ENCODE measurements at regions of chr10 and their contacts with region 1.

Region 1: DNA sequence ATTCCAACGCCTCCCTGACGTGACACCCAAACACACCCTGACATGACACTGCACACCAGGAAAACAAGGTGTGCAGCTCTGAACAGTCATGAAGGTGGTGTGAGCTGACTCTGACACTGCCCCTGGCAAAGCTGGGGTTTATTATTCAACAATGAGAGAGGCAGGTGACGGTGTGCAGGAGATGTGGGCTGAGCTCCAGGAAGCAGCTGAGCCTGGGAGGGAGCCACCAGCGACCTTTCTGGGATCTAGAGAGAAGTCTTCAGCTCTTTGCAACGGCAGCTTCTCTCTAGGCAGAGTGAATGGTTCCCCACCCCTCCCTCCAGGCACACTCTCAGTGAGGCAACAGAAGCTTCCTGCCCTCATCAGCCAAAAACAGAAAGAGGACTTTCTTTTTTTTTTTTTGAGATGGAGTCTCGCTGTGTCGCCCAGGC is 65.6 kb downstream of the SH3PXD2A start:
- DNase-seq: no peak
- ATAC-seq: no peak
- H3K4me3 ChIP-seq: no peak overlapping the region
- H3K27ac ChIP-seq: peak overlapping the region; percentile 27
- H3K4me1 ChIP-seq: peaks cover 81% of the 10 kb centered on the region
- H3K27me3 ChIP-seq: no peaks in the 10 kb centered on the region
- CTCF ChIP-seq: no peak
- EP300 ChIP-seq: no peak
- POLR2A ChIP-seq: no peak
- RAD21 ChIP-seq: no peak

Region 2: GRCh38 chr10:103712570-103713498 is 77.0 kb before region 1 on chr10:
- CTCF ChIA-PET with region 1: no interaction called
- POLR2A ChIA-PET with region 1: no interaction called
- in situ Hi-C with region 1: loop called (anchors 5 kb)
- intact Hi-C with region 1: loop called (anchors 5 kb)
- DNase-seq: peak; percentile 57
- ATAC-seq: peak; percentile 59
- H3K4me3 ChIP-seq: no peak overlapping the region
- H3K27ac ChIP-seq: peak overlapping the region; percentile 11
- H3K4me1 ChIP-seq: peaks cover 58% of the 10 kb centered on the region
- H3K27me3 ChIP-seq: no peaks in the 10 kb centered on the region
- CTCF ChIP-seq: peak; percentile 90
- EP300 ChIP-seq: no peak
- POLR2A ChIP-seq: no peak
- RAD21 ChIP-seq: peak; percentile 82

Region 3: DNA sequence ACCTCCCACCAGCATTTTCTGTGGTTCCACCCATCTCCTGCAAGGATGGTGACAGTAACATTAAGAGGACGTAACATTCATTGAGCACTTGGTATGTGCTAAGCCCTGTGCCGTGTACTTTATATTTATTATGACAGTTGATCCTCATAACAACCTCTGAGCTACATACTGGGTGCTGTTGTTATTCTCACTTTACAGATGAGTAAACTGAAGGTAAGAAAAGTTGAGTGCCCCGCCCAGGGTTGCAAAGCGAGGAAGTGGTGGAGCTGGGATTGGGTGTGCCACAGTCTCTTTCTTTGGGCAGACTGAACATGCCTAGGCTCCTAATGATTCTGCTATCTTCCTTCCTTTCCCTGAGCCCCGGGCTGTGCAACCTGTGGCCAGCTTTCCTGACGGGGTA is 41.8 kb before region 1 on chr10:
- CTCF ChIA-PET with region 1: no interaction called
- POLR2A ChIA-PET with region 1: no interaction called
- in situ Hi-C with region 1: no loop called
- intact Hi-C with region 1: no loop called
- DNase-seq: no peak
- ATAC-seq: no peak
- H3K4me3 ChIP-seq: no peak overlapping the region
- H3K27ac ChIP-seq: no peak overlapping the region
- H3K4me1 ChIP-seq: peaks cover 13% of the 10 kb centered on the region
- H3K27me3 ChIP-seq: no peaks in the 10 kb centered on the region
- CTCF ChIP-seq: no peak
- EP300 ChIP-seq: no peak
- POLR2A ChIP-seq: no peak
- RAD21 ChIP-seq: no peak

Region 4: GRCh38 chr10:103759100-103759781 is 30.5 kb before region 1 on chr10:
- CTCF ChIA-PET with region 1: no interaction called
- POLR2A ChIA-PET with region 1: interaction called, 19 read pairs
- in situ Hi-C with region 1: no loop called
- intact Hi-C with region 1: loop called (anchors 2 kb)
- DNase-seq: peak; percentile 80
- ATAC-seq: peak; percentile 76
- H3K4me3 ChIP-seq: no peak overlapping the region
- H3K27ac ChIP-seq: peak overlapping the region; percentile 53
- H3K4me1 ChIP-seq: peaks cover 31% of the 10 kb centered on the region
- H3K27me3 ChIP-seq: no peaks in the 10 kb centered on the region
- CTCF ChIP-seq: no peak
- EP300 ChIP-seq: 0 out of 4 replicates have a peak, but pooled peaks of 1 of the 2 experiments have one; percentile 24
- POLR2A ChIP-seq: no peak
- RAD21 ChIP-seq: no peak

Region 5: GRCh38 chr10:103814626-103815370 is 25.0 kb after region 1 on chr10:
- CTCF ChIA-PET with region 1: no interaction called
- POLR2A ChIA-PET with region 1: interaction called, 12 read pairs
- in situ Hi-C with region 1: no loop called
- intact Hi-C with region 1: no loop called
- DNase-seq: no peak
- ATAC-seq: no peak
- H3K4me3 ChIP-seq: no peak overlapping the region
- H3K27ac ChIP-seq: no peak overlapping the region
- H3K4me1 ChIP-seq: peaks cover 73% of the 10 kb centered on the region
- H3K27me3 ChIP-seq: no peaks in the 10 kb centered on the region; a peak in 1 of 5 replicates
- CTCF ChIP-seq: no peak
- EP300 ChIP-seq: no peak
- POLR2A ChIP-seq: no peak
- RAD21 ChIP-seq: no peak

Region 6: GRCh38 chr10:103820101-103821062 is 30.6 kb after region 1 on chr10:
- CTCF ChIA-PET with region 1: no interaction called
- POLR2A ChIA-PET with region 1: interaction called, 10 read pairs
- in situ Hi-C with region 1: no loop called
- intact Hi-C with region 1: no loop called
- DNase-seq: no peak
- ATAC-seq: no peak
- H3K4me3 ChIP-seq: no peak overlapping the region; a peak in 1 of 6 replicates
- H3K27ac ChIP-seq: no peak overlapping the region
- H3K4me1 ChIP-seq: peaks cover 78% of the 10 kb centered on the region
- H3K27me3 ChIP-seq: no peaks in the 10 kb centered on the region
- CTCF ChIP-seq: no peak
- EP300 ChIP-seq: no peak
- POLR2A ChIP-seq: no peak
- RAD21 ChIP-seq: no peak

Region 7: GRCh38 chr10:103833731-103834365 is 44.1 kb after region 1 on chr10:
- CTCF ChIA-PET with region 1: no interaction called
- POLR2A ChIA-PET with region 1: interaction called, 30 read pairs
- in situ Hi-C with region 1: no loop called
- intact Hi-C with region 1: no loop called
- DNase-seq: peak; percentile 88
- ATAC-seq: peak; percentile 79
- H3K4me3 ChIP-seq: peak overlapping the region; percentile 2 to 29 (median 21); a peak in 3 of 6 replicates
- H3K27ac ChIP-seq: peak overlapping the region; percentile 81
- H3K4me1 ChIP-seq: peaks cover 94% of the 10 kb centered on the region
- H3K27me3 ChIP-seq: no peaks in the 10 kb centered on the region
- CTCF ChIP-seq: 0 out of 2 replicates have a peak, but pooled peaks have one; percentile 10
- EP300 ChIP-seq: peak in 1 of 2 experiments; percentile 79; a peak in 2 of 4 replicates
- POLR2A ChIP-seq: no peak
- RAD21 ChIP-seq: peak; percentile 40; the same call in 1 of the 2 replicates

Region 8: DNA sequence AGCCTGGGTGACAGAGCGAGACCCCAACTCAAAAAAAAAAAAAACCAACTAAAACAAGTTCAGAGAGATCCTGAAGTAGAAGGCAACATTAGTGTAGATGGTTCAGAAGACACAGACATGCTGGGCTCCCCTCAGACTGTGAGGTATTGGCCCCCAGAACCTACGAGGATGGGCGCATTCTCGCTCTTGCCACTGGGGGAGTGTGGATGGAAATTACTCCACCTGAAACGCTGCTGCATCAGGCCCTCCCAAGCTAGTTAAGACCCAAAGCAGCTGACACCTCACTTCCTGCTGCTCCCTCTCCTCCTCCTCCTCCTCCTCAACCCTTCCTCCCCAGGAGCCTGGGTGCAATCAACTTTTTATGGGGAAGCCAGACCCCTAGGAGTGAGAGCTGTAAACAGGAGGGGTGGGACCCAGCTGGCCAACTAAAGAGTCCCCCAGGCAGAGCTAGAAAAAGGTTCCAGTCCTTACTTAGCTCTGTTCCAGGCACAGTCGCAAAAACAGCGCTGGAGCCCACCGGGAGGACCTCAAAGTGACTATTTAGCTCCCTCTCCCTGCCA is 58.2 kb after region 1 on chr10:
- CTCF ChIA-PET with region 1: no interaction called
- POLR2A ChIA-PET with region 1: interaction called, 107 read pairs
- in situ Hi-C with region 1: no loop called
- intact Hi-C with region 1: no loop called
- DNase-seq: peak; percentile 21
- ATAC-seq: peak; percentile 79
- H3K4me3 ChIP-seq: no peak overlapping the region
- H3K27ac ChIP-seq: peak overlapping the region; percentile 16
- H3K4me1 ChIP-seq: peaks cover 93% of the 10 kb centered on the region
- H3K27me3 ChIP-seq: no peaks in the 10 kb centered on the region
- CTCF ChIP-seq: 0 out of 2 replicates have a peak, but pooled peaks have one; percentile 11
- EP300 ChIP-seq: no peak
- POLR2A ChIP-seq: no peak
- RAD21 ChIP-seq: no peak

Region 9: DNA sequence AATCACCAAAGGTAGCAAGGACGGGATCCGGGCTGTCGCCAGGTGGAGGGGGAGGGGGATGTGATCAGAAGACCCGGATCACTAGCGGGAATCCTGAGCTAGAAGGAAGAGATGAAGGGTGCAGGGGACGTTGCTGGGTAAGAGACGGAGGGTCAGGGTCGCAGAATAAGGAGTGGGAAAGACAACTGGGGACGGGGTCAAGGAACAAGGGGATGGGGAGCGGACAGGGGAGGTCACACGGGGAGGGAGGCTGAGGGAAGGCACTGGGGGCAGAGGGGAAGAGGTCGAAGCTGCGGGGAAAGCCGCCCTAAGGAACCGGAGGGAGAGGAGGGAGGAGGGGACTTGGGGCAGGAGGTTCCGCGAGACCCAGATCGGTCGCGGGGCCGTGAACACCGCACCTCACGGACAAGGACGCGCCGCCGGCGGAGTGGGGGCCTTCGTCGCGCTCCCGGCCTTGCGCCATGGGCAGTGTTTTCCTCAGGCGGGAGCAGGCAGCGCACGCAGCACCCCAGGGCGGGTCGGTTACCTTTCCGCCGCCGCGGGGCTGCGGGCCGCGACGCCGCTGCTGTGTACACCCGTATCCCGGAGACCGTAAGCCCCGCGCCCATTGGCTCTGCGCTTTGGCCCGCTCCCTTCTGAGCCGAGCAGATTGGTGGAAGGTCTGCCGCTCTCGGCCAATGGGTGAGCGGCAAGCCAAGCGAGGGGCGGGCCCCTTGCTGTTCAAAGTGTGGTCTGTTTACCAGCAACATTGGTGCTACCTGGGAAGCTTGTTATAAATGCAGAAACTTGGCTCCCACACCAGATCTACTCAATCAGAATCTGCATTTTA is 442.2 kb after region 1 on chr10 and contains the start of gene CFAP43:
- CTCF ChIA-PET with region 1: no interaction called
- POLR2A ChIA-PET with region 1: no interaction called
- in situ Hi-C with region 1: no loop called
- intact Hi-C with region 1: no loop called
- DNase-seq: peak; percentile 93
- ATAC-seq: peak; percentile 100
- H3K4me3 ChIP-seq: peak within 1 kb of the TSS; percentile 79 to 93 (median 86)
- H3K27ac ChIP-seq: peak within 1 kb of the TSS; percentile 82
- H3K4me1 ChIP-seq: peaks cover 21% of the 10 kb centered on the region
- H3K27me3 ChIP-seq: no peaks in the 10 kb centered on the region; a peak in 1 of 5 replicates
- CTCF ChIP-seq: no peak; the same call in 1 of the 2 replicates
- EP300 ChIP-seq: no peak
- POLR2A ChIP-seq: peak; percentile 49 to 61; a peak in 3 of 4 replicates
- RAD21 ChIP-seq: peak; percentile 30; the same call in 1 of the 2 replicates
- total RNA-seq, gene CFAP43: 0.24 and 0.46 TPM in 2 replicates

Region 10: GRCh38 chr10:105288026-105288425 is 1498.2 kb after region 1 on chr10:
- CTCF ChIA-PET with region 1: no interaction called
- POLR2A ChIA-PET with region 1: no interaction called
- in situ Hi-C with region 1: no loop called
- intact Hi-C with region 1: no loop called
- DNase-seq: no peak
- ATAC-seq: no peak
- H3K4me3 ChIP-seq: no peak overlapping the region
- H3K27ac ChIP-seq: no peak overlapping the region
- H3K4me1 ChIP-seq: no peaks in the 10 kb centered on the region
- H3K27me3 ChIP-seq: no peaks in the 10 kb centered on the region
- CTCF ChIP-seq: no peak
- EP300 ChIP-seq: no peak
- POLR2A ChIP-seq: no peak
- RAD21 ChIP-seq: no peak